ENCODE measurements at regions of chr17 and their contacts with region 1.

Region 1: GRCh38 chr17:700504-701094 is 14.0 kb downstream of the VPS53 start:
- DNase-seq: peak; percentile 26 to 42 (median 34)
- ATAC-seq: no peak; the same call in 2 of the 3 replicates
- H3K4me3 ChIP-seq: no peak overlapping the region
- H3K27ac ChIP-seq: no peak overlapping the region
- H3K4me1 ChIP-seq: no peaks in the 10 kb centered on the region
- H3K27me3 ChIP-seq: no peaks in the 10 kb centered on the region
- CTCF ChIP-seq: peak in 2 of 3 experiments; percentile 35 to 73; a peak in 4 of 6 replicates
- EP300 ChIP-seq: no peak
- POLR2A ChIP-seq: no peak
- RAD21 ChIP-seq: peak; percentile 50 to 71

Region 2: DNA sequence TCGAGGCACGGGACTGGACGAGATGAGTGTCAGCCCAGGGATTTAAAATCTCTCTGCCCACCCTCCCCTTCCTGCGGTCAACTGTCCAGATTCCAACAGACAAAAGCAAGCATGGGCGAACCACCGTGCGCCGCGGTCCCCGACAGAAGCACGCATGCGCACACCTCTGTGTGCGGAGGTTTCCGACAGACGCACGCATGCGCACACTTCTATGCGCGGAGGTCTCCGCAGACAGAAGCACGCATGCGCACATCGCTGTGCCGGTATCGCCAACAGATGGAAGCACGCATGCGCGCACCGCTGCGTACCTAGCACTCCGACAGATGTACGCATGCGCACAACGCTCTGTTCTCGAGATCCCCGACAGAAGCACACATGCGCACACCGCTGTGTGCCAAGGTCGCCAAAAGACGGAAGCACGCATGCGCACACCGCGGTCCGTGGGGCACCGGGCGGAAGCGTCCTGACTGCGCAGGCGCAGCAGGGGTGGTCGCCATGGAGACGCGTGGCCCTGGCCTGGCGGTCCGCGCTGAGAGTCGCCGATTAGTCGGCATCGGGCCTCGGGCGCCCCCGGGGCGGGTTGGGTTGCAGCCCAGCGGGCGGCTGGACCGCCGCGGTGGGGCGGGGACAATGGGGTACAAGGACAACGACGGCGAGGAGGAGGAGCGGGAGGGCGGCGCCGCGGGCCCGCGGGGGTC is 290.6 kb before region 1 on chr17:
- CTCF ChIA-PET with region 1: interaction called, 14 read pairs
- POLR2A ChIA-PET with region 1: interaction called, 3 read pairs
- in situ Hi-C with region 1: loop called (anchors 5 kb)
- intact Hi-C with region 1: loop called (anchors 1 kb)
- DNase-seq: peak; percentile 97 to 98 (median 98)
- ATAC-seq: peak; percentile 92
- H3K4me3 ChIP-seq: peak overlapping the region; percentile 56
- H3K27ac ChIP-seq: no peak overlapping the region
- H3K4me1 ChIP-seq: peaks cover 7 to 17% of the 10 kb centered on the region in 2 experiments; a peak in 4 of 5 replicates
- H3K27me3 ChIP-seq: peaks cover 0 to 8% of the 10 kb centered on the region in 2 experiments; a peak in 1 of 5 replicates
- CTCF ChIP-seq: no peak
- EP300 ChIP-seq: no peak
- POLR2A ChIP-seq: peak; percentile 51
- RAD21 ChIP-seq: no peak